Activated CD4-positive, alpha-beta T cell treated with anti-CD3 and anti-CD28 coated beads, Interleukin-2, amount 10 ng/mL, durations not matched to agents 24 days and 14 days (primary cell): ENCODE measurements at regions of chrX and their contacts with region 1.

Region 1: GRCh38 chrX:154490414-154491083 is at the start of gene SLC10A3:
- DNase-seq: peak; percentile 96
- H3K4me3 Mint-ChIP-seq: peak within 1 kb of the TSS; percentile 91
- H3K27ac Mint-ChIP-seq: peak within 1 kb of the TSS; percentile 92
- H3K4me1 Mint-ChIP-seq: peaks cover 12% of the 10 kb centered on the region
- H3K27me3 Mint-ChIP-seq: no peaks in the 10 kb centered on the region
- total RNA-seq, gene SLC10A3: 18.2 and 20.8 TPM in 2 replicates

Region 2: GRCh38 chrX:154436983-154437719 is 53.4 kb before region 1 on chrX and contains the start of gene GDI1:
- intact Hi-C with region 1: loop called (anchors 5 kb)
- DNase-seq: peak; percentile 89
- H3K4me3 Mint-ChIP-seq: peak within 1 kb of the TSS; percentile 89
- H3K27ac Mint-ChIP-seq: peak within 1 kb of the TSS; percentile 92
- H3K4me1 Mint-ChIP-seq: peaks cover 15% of the 10 kb centered on the region
- H3K27me3 Mint-ChIP-seq: no peaks in the 10 kb centered on the region
- total RNA-seq, gene GDI1: 118 and 120 TPM in 2 replicates

Region 3: DNA sequence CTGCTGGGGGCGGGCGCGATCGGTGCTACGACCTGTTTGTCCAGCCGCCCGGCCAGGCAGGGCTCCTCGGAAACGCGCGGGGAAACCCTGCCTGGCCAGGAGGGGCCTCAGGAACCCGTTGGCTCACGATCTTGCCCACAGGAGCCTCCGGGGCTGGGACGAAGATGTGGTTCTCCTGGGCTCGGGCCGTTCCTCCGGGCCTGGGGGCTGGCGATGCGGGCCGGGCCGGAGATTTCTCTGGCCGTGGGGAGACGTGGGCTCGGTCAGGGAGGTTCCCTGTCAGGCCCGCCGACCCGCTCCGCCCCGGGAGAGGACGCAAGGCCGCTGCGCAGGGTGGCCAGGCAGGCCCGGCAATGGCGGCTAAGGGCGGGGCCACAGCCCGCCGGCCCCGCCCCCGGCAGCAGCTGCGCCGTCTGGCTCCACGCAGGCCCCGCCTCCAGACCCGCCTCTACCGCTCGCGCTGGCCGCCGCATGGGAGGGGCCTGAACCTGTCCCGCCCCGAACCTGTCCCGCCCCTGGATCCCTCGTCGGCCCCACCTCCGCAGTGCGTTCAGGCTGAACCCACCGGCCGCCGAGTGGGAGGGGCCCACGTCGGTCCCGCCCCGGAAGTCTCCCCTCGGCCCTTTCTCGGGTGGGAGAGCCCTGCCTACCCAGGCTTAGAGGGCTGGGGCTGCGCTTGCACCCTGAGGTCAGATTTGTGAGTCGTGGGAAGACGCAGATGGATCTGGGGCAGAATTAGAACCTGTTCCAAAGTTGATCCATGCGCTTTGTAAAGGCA is 25.5 kb after region 1 on chrX and contains the start of gene FAM3A:
- intact Hi-C with region 1: loop called (anchors 1 kb)
- DNase-seq: peak; percentile 97
- H3K4me3 Mint-ChIP-seq: peak within 1 kb of the TSS; percentile 90
- H3K27ac Mint-ChIP-seq: peak within 1 kb of the TSS; percentile 93
- H3K4me1 Mint-ChIP-seq: peaks cover 23% of the 10 kb centered on the region
- H3K27me3 Mint-ChIP-seq: no peaks in the 10 kb centered on the region
- total RNA-seq, gene FAM3A: 36.5 and 38.0 TPM in 2 replicates

Region 4: DNA sequence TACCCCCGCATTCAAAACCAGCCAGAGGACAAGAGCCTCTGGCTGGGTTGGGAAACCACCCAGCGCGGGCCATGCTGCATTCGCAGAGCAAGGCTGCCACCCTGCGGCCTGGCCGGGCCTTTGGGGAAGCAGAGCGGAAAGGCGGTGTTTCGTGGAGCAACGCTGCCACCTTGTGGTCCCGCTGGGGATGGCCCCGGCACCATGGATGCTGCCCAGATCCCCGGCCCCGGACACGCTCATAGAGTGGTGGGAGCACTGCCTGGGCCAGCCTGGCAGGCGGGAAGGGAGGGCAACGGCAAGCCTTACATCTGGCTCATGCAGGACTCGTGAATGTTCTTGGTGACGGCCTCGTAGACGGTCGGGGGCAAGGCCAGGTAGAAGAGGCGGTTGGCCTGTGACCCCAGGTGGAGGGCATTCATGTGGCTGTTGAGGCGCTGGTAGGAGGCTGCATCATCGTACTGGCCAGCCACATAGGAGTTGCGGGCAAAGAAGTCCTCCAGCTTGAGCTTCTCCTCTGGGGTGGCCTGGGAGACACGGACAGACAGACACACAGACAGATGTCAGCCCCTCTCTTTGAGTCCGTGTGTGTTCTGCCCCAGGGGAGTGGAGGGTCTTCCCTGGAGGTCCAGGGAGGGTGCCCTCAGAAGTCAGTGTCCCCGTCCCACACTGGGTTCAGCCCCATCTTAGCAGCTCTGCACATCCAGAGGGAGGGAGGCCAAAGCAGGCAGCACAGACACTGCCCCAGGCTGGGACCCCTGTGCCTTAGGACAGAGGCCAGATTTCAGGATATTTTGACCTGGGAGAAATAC is 44.5 kb after region 1 on chrX:
- intact Hi-C with region 1: loop called (anchors 2 kb)
- DNase-seq: peak; percentile 95
- H3K4me3 Mint-ChIP-seq: no peak overlapping the region
- H3K27ac Mint-ChIP-seq: no peak overlapping the region
- H3K4me1 Mint-ChIP-seq: no peaks in the 10 kb centered on the region
- H3K27me3 Mint-ChIP-seq: no peaks in the 10 kb centered on the region